Adrenal gland (tissue), 19 donors: ENCODE measurements at regions of chr3 and their contacts with region 1.

Region 1: DNA sequence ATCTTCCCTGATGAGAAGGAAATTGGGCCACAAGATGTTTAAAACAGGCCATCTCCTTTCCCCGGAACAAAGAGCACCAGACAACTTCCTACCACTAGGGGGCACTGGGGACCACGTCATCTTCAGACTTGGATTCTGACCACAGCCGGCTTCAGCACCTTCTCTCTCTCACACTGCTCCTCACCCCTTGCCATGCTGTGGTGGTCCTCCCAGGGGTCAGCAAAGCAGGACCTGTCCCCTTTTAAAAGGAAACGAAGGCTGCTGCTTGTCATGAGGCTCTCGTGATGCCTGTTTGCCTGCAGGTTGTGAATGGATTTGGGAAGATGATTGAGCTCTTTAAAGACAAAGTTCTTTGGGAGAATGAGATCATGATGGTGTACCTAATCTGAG is 16.2 kb downstream of the RFT1 start:
- DNase-seq: peak; percentile 82 to 93 (median 87)
- H3K4me3 ChIP-seq: no peak overlapping the region
- H3K27ac ChIP-seq: peak overlapping the region in 3 of 5 donors; percentile 71 to 81 (median 81)
- H3K4me1 ChIP-seq: peaks cover 12 to 34% of the 10 kb centered on the region in 2 donors
- H3K27me3 ChIP-seq: no peaks in the 10 kb centered on the region
- CTCF ChIP-seq: peak; percentile 88 to 97 (median 94)
- POLR2A ChIP-seq: no peak

Region 2: GRCh38 chr3:53195602-53196574 is 81.9 kb after region 1 on chr3:
- intact Hi-C with region 1: loop called (anchors 2 kb)
- DNase-seq: peak in 6 of 7 donors; percentile 47 to 66 (median 55)
- H3K4me3 ChIP-seq: no peak overlapping the region
- H3K27ac ChIP-seq: no peak overlapping the region
- H3K4me1 ChIP-seq: peaks cover 0 to 21% of the 10 kb centered on the region in 2 donors
- H3K27me3 ChIP-seq: no peaks in the 10 kb centered on the region
- CTCF ChIP-seq: peak; percentile 91 to 100 (median 97)
- POLR2A ChIP-seq: no peak